Psoas muscle (tissue), 8 donors: ENCODE measurements at regions of chr11 and their contacts with region 1.

Region 1: DNA sequence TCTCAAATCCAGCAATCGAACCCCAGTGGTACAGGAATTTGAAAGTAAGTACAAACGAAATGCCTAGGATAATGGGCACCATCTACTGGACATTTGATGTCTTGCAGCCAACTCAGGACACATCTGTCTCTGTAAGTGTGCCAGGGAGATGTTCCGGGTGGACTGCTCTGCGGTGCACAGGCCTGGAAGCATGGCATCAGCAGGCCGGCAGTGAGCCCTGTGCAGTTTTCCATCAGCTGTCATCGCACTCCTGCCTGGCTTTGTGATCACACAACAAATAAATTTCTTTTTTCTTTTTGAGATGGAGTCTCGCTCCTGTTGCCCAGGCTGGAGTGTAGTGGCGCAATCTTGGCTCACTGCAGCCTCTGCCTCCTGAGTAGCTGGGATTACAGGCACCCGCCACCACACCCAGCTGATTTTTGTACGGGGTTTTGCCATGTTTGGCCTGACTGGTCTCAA is 71.0 kb downstream of the JAM3 start:
- DNase-seq: peak in 1 of 2 donors; percentile 40
- ATAC-seq: peak; percentile 88 to 96 (median 94)
- H3K4me3 ChIP-seq: no peak overlapping the region
- H3K27ac ChIP-seq: no peak overlapping the region
- H3K4me1 ChIP-seq: no peaks in the 10 kb centered on the region
- H3K27me3 ChIP-seq: no peaks in the 10 kb centered on the region
- CTCF ChIP-seq: peak; percentile 90

Region 2: GRCh38 chr11:133927690-133928627 is 211.9 kb before region 1 on chr11:
- intact Hi-C with region 1: loop called (anchors 5 kb)
- DNase-seq: peak; percentile 59 to 79
- ATAC-seq: peak; percentile 91 to 95 (median 95)
- H3K4me3 ChIP-seq: no peak overlapping the region
- H3K27ac ChIP-seq: no peak overlapping the region
- H3K4me1 ChIP-seq: no peaks in the 10 kb centered on the region
- H3K27me3 ChIP-seq: no peaks in the 10 kb centered on the region
- CTCF ChIP-seq: peak; percentile 86

Region 3: GRCh38 chr11:134196756-134197155 is 56.9 kb after region 1 on chr11:
- intact Hi-C with region 1: no loop called
- DNase-seq: no peak
- ATAC-seq: no peak
- H3K4me3 ChIP-seq: no peak overlapping the region
- H3K27ac ChIP-seq: no peak overlapping the region
- H3K4me1 ChIP-seq: no peaks in the 10 kb centered on the region
- H3K27me3 ChIP-seq: no peaks in the 10 kb centered on the region
- CTCF ChIP-seq: no peak